Naive thymus-derived CD4-positive, alpha-beta T cell (primary cell): ENCODE measurements at regions of chr16 and their contacts with region 1.

Region 1: GRCh38 chr16:68328151-68328859 is 17.5 kb downstream of the PRMT7 start:
- DNase-seq: peak; percentile 52 to 81 (median 77)
- ATAC-seq: peak; percentile 99
- H3K4me3 ChIP-seq: no peak overlapping the region
- H3K4me3 Mint-ChIP-seq: no peak overlapping the region
- H3K27ac ChIP-seq: no peak overlapping the region
- H3K27ac Mint-ChIP-seq: peak overlapping the region in 4 of 9 donors; percentile 0 to 57 (median 9)
- H3K4me1 ChIP-seq: peaks cover 0 to 16% of the 10 kb centered on the region in 2 donors
- H3K4me1 Mint-ChIP-seq: peaks cover 16 to 28% (median 19%) of the 10 kb centered on the region in 7 donors
- H3K27me3 ChIP-seq: no peaks in the 10 kb centered on the region
- H3K27me3 Mint-ChIP-seq: no peaks in the 10 kb centered on the region

Region 2: DNA sequence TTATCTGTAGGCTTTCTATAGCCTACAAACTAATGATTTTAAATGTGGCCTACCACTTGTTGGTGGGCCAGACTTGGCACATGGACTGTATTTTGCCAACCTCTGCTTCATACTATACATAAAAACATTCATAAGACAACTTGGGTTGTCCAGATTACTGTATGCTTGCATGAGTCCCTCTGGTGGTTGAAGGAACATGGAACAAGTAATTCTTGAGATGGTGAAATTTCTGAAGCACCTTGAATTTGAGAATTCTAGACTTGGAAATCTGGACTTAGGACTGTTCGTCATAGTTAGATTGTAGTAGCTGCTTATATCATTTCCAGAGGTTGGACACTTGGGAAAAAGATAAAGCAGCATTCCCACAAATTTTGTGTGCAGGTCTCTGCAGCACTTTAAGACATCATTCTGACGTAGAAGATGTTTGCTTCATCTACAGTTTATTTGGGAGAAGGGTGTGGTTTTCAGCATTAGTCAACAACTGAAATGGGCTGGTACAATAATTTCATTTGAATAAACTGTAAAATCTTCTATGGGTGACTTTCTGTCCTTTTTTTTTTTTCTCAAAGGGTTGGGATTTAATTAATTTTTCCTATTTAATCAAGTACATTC is 211.9 kb before region 1 on chr16:
- CTCF ChIA-PET with region 1: no interaction called
- POLR2A ChIA-PET with region 1: no interaction called
- intact Hi-C with region 1: no loop called
- DNase-seq: peak in 7 of 9 donors; percentile 11 to 38 (median 19)
- ATAC-seq: peak; percentile 73
- H3K4me3 ChIP-seq: no peak overlapping the region
- H3K4me3 Mint-ChIP-seq: peak overlapping the region in 7 of 10 donors; percentile 3 to 60 (median 52)
- H3K27ac ChIP-seq: peak overlapping the region; percentile 11
- H3K27ac Mint-ChIP-seq: peak overlapping the region in 6 of 9 donors; percentile 28 to 77 (median 57)
- H3K4me1 ChIP-seq: peaks cover 36 to 50% of the 10 kb centered on the region in 2 donors
- H3K4me1 Mint-ChIP-seq: peaks cover 48 to 97% (median 82%) of the 10 kb centered on the region in 7 donors
- H3K27me3 ChIP-seq: no peaks in the 10 kb centered on the region
- H3K27me3 Mint-ChIP-seq: no peaks in the 10 kb centered on the region

Region 3: GRCh38 chr16:68257906-68258800 is 70.2 kb before region 1 on chr16:
- CTCF ChIA-PET with region 1: interaction called, 224 read pairs
- POLR2A ChIA-PET with region 1: interaction called, 68 read pairs
- intact Hi-C with region 1: loop called (anchors 1 kb)
- DNase-seq: no peak
- ATAC-seq: peak; percentile 52
- H3K4me3 ChIP-seq: no peak overlapping the region
- H3K4me3 Mint-ChIP-seq: no peak overlapping the region
- H3K27ac ChIP-seq: no peak overlapping the region
- H3K27ac Mint-ChIP-seq: peak overlapping the region in 7 of 9 donors; percentile 17 to 80 (median 30)
- H3K4me1 ChIP-seq: peaks cover 0 to 18% of the 10 kb centered on the region in 2 donors
- H3K4me1 Mint-ChIP-seq: peaks cover 7 to 33% (median 24%) of the 10 kb centered on the region in 7 donors
- H3K27me3 ChIP-seq: no peaks in the 10 kb centered on the region
- H3K27me3 Mint-ChIP-seq: no peaks in the 10 kb centered on the region

Region 4: DNA sequence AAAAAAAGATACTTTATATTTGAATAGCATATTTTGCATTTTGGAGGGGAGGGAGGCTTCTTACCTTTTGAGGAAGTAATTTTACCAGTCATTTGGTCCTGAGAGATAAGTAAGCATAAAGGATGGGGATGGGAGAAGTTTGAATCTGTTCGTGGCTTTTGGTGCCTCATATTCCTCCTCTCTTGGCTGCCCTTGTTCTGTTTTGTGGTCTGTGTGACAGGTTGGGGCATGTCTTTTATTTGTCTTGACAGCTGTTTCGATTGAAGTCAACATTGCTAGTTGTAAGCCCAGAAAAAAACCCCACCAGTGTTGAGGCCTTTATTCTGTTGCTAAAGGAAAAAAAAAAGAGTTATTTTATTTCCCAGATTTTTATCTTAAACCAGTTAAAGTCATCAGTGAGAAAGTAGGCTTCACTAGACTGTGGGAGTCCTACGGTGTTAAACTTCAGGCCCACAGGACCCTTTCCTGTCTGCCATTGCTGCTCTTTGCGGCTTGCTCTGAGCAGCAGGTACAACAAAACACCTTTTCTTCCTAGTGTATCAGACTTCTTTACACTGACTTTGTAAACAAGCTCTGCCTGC is 52.6 kb before region 1 on chr16:
- CTCF ChIA-PET with region 1: interaction called, 19 read pairs
- POLR2A ChIA-PET with region 1: interaction called, 4 read pairs
- intact Hi-C with region 1: no loop called
- DNase-seq: peak in 7 of 9 donors; percentile 68 to 84 (median 83)
- ATAC-seq: peak; percentile 86
- H3K4me3 ChIP-seq: peak overlapping the region; percentile 38
- H3K4me3 Mint-ChIP-seq: peak overlapping the region; percentile 71 to 100 (median 80)
- H3K27ac ChIP-seq: peak overlapping the region; percentile 83
- H3K27ac Mint-ChIP-seq: peak overlapping the region; percentile 89 to 98 (median 97)
- H3K4me1 ChIP-seq: peaks cover 58 to 83% of the 10 kb centered on the region in 2 donors
- H3K4me1 Mint-ChIP-seq: peaks cover 40 to 84% (median 74%) of the 10 kb centered on the region in 7 donors
- H3K27me3 ChIP-seq: no peaks in the 10 kb centered on the region
- H3K27me3 Mint-ChIP-seq: no peaks in the 10 kb centered on the region

Region 5: DNA sequence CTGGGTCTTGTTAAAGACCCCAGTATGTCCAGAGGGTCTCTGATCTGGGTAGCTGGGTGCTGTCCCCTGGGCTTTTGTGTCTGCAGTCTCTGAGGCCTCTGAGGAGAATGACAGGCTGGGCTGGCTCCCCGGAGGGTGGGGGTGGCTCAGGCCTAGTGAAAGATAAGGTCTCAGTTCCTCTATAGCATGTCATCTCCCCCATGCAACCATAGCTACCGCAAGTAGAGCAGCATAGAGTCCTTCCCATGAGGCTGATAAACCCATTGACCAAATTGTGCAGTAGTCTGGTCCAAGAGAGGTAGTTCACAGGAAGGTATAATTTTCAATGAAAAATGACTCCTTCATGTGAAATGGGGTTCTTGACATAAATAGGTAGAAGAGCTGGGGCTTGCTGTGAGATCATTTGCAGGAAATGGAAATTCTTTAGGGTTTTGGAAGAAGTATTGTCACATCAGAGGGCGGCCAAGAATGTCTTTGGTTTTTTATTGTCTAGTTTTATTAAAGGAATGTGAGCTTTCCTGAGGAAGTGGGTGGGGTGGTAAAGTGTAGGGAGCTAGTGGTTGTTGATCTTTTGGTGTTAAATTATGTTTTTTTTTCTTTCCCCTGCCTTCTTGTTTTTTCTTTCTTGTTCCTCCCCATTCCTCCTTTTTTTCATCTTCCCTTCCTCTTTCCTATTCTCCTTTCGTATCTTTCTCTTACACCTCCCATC is 38.5 kb before region 1 on chr16:
- CTCF ChIA-PET with region 1: interaction called, 18 read pairs
- POLR2A ChIA-PET with region 1: interaction called, 4 read pairs
- intact Hi-C with region 1: loop called in 1 of 2 experiments (anchors 5 kb)
- DNase-seq: peak in 6 of 9 donors; percentile 20 to 57 (median 52)
- ATAC-seq: peak; percentile 75
- H3K4me3 ChIP-seq: peak overlapping the region; percentile 2
- H3K4me3 Mint-ChIP-seq: peak overlapping the region; percentile 43 to 87 (median 68)
- H3K27ac ChIP-seq: peak overlapping the region; percentile 68
- H3K27ac Mint-ChIP-seq: peak overlapping the region; percentile 84 to 95 (median 90)
- H3K4me1 ChIP-seq: peaks cover 76 to 83% of the 10 kb centered on the region in 2 donors
- H3K4me1 Mint-ChIP-seq: peaks cover 70 to 97% (median 87%) of the 10 kb centered on the region in 7 donors
- H3K27me3 ChIP-seq: no peaks in the 10 kb centered on the region
- H3K27me3 Mint-ChIP-seq: no peaks in the 10 kb centered on the region